ENCODE measurements at regions of chr13 and their contacts with region 1.

Region 1: GRCh38 chr13:71320452-71320851 is 546.6 kb downstream of the DACH1 start:
- DNase-seq: no peak
- H3K4me3 ChIP-seq: no peak overlapping the region
- H3K27ac ChIP-seq: no peak overlapping the region
- H3K4me1 ChIP-seq: no peaks in the 10 kb centered on the region
- H3K27me3 ChIP-seq: no peaks in the 10 kb centered on the region
- CTCF ChIP-seq: peak; percentile 7 to 42 (median 37)
- EP300 ChIP-seq: no peak
- POLR2A ChIP-seq: no peak

Region 2: DNA sequence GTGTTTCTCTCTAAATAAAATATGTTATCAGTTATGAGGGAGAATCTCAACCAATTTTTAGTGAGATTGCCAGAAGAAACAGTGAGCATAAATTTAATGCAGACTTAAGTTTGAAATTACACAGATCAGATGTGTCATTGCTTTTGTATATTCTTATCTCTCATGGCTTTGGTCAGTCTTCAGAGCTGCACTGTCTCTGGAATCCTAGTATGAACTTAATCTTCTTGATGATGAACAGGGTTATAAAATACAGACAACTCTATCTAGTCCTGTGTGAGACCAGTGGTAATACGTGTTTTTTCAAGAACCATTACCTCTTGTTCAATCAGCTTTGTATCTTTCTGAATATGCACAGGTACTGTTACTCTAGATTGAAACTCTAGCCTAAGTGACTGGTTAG is 18.6 kb after region 1 on chr13:
- in situ Hi-C with region 1: no loop called
- intact Hi-C with region 1: no loop called
- DNase-seq: no peak
- H3K4me3 ChIP-seq: no peak overlapping the region
- H3K27ac ChIP-seq: no peak overlapping the region
- H3K4me1 ChIP-seq: no peaks in the 10 kb centered on the region
- H3K27me3 ChIP-seq: no peaks in the 10 kb centered on the region
- CTCF ChIP-seq: no peak
- EP300 ChIP-seq: no peak
- POLR2A ChIP-seq: no peak

Region 3: GRCh38 chr13:71399631-71400215 is 79.3 kb after region 1 on chr13:
- in situ Hi-C with region 1: no loop called
- intact Hi-C with region 1: no loop called
- DNase-seq: no peak
- H3K4me3 ChIP-seq: no peak overlapping the region
- H3K27ac ChIP-seq: no peak overlapping the region
- H3K4me1 ChIP-seq: no peaks in the 10 kb centered on the region
- H3K27me3 ChIP-seq: no peaks in the 10 kb centered on the region
- CTCF ChIP-seq: no peak
- EP300 ChIP-seq: no peak
- POLR2A ChIP-seq: no peak

Region 4: GRCh38 chr13:71879129-71879535 is 558.7 kb after region 1 on chr13:
- in situ Hi-C with region 1: loop called in 3 of 4 experiments (anchors 25 kb)
- intact Hi-C with region 1: no loop called
- DNase-seq: no peak
- H3K4me3 ChIP-seq: peak overlapping the region in 1 of 4 donors; percentile 20
- H3K27ac ChIP-seq: no peak overlapping the region
- H3K4me1 ChIP-seq: peaks cover 4 to 17% (median 6%) of the 10 kb centered on the region in 4 donors
- H3K27me3 ChIP-seq: no peaks in the 10 kb centered on the region
- CTCF ChIP-seq: peak; percentile 46 to 64 (median 61)
- EP300 ChIP-seq: no peak
- POLR2A ChIP-seq: no peak

Measured in transverse colon (tissue), 4 donors.